OCI-LY7 (cell line): ENCODE measurements at regions of chr7 and their contacts with region 1.

Region 1: DNA sequence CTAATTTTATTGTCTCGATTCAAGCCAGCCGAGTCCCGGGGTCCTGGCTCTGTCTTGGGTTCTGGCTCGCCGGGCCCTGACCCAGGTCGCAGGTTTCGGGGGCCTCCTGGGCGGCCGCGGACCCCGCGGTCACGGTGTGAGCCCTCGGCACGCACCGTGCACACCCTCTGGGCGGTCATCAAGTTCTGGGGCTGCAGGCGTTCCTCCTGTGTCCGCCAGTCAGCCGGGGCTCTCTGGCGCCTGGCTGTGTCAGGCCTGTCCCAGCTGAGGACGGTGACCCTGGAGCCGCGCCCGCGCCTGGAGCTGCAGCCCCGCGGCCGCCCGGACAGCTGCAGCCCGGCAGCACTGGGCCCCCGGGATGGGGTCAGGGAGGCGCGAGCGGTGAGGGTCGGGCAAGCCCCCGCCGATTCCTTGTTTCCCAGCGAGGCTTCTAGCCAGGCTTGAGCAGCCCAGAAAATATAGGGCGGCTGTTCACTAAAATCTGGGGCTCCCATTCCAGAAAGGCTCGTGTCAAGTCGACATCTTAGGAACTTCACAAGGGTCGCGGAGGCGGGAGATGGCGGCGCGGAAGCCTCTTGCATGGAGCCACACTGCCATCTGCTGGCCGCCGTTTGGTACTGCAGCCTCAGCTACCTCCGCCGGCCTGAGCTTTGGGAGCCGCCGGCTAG is 4.2 kb upstream of the HOXA7 start:
- DNase-seq: peak; percentile 88
- H3K4me3 ChIP-seq: peak overlapping the region; percentile 67
- H3K27ac ChIP-seq: no peak overlapping the region
- H3K4me1 ChIP-seq: peaks cover 15% of the 10 kb centered on the region
- CTCF ChIP-seq: peak; percentile 94

Region 2: DNA sequence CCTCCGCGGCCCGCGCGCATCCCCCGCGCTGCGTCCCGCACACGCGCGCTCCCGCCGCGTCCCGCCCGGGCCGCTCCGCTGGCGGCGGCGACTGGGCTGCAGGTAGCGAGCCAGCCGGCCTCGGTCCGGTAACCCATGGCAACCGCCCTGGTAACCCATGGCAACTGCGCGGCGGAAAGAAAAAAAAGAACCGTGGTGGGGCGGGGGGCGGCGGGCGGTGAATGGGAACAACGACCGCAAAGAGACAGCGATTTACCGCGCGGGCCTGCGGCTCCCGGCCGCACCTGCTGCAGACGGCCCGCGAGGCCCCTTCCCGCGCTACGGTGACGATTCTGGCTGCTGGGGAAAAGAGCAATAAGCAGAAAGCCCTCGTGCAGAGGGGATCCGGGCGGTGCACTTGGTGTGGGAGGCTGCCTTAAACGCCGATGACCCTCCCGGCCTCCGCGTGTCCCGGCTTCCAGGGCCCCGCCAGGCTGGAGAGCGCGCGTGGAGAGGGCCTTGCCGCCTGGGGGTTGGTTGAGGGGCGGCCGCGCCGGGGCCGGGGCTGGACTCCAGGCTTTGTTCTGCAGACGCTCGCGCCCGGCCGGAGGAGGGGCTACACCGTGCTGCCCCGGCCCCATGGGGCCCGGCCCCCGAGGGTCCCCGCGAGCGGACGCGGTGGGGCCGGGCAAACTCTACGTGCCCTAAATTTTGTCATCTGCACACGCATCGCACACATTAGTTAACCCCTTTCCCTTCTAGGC is 784.3 kb before region 1 on chr7:
- CTCF ChIA-PET with region 1: interaction called, 23 read pairs
- POLR2A ChIA-PET with region 1: no interaction called
- intact Hi-C with region 1: no loop called
- DNase-seq: peak; percentile 37
- H3K4me3 ChIP-seq: peak overlapping the region; percentile 55
- H3K27ac ChIP-seq: no peak overlapping the region
- H3K4me1 ChIP-seq: peaks cover 16% of the 10 kb centered on the region
- CTCF ChIP-seq: no peak

Region 3: GRCh38 chr7:26667500-26668133 is 493.1 kb before region 1 on chr7:
- CTCF ChIA-PET with region 1: no interaction called
- POLR2A ChIA-PET with region 1: no interaction called
- intact Hi-C with region 1: loop called (anchors 5 kb)
- DNase-seq: peak; percentile 85
- H3K4me3 ChIP-seq: no peak overlapping the region
- H3K27ac ChIP-seq: no peak overlapping the region
- H3K4me1 ChIP-seq: no peaks in the 10 kb centered on the region
- CTCF ChIP-seq: peak; percentile 96

Region 4: GRCh38 chr7:26843705-26844104 is 317.0 kb before region 1 on chr7:
- CTCF ChIA-PET with region 1: interaction called, 14 read pairs
- POLR2A ChIA-PET with region 1: no interaction called
- intact Hi-C with region 1: no loop called
- DNase-seq: peak; percentile 11
- H3K4me3 ChIP-seq: no peak overlapping the region
- H3K27ac ChIP-seq: no peak overlapping the region
- H3K4me1 ChIP-seq: no peaks in the 10 kb centered on the region
- CTCF ChIP-seq: peak; percentile 42; the same call in 1 of the 2 replicates

Region 5: DNA sequence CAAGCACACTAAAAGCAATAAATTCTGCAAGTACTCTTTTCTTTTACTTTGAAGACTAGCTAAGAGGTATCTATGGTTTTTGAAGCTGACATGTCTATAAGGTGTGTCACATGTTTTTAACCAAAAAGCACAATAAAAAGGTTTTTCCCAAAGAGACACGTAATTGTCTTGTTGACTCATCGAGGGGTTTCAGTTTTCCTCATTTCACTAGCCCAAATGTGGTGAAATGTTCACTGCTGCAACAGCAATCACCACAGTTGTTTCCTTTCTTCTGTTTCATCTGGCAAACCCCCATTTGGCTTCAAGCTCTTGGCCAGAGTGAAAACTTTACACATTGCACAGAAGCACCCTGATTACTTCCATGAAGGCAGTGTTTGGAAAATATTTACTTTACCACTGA is 26.3 kb before region 1 on chr7:
- CTCF ChIA-PET with region 1: no interaction called
- POLR2A ChIA-PET with region 1: no interaction called
- intact Hi-C with region 1: no loop called
- DNase-seq: no peak
- H3K4me3 ChIP-seq: no peak overlapping the region
- H3K27ac ChIP-seq: no peak overlapping the region
- H3K4me1 ChIP-seq: peaks cover 4% of the 10 kb centered on the region
- CTCF ChIP-seq: no peak

Region 6: DNA sequence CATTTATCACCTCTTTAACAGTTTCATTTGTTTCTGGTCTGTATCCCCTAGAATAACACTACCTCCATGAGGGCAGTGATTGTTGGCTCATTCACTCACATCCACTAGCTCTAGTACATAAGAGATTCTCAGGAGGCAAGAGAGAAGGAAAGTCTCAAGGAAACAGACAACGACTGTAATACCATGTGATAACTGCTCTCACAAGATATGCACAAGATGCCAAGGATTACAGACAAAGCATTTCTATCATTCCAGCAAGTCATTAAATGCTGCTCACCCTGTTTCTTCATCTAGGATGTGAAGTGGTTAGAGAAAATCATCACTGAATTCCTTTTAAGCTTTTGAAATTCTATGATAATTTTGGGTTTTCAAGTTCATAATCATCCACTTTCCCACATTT is 386.7 kb after region 1 on chr7:
- CTCF ChIA-PET with region 1: no interaction called
- POLR2A ChIA-PET with region 1: no interaction called
- intact Hi-C with region 1: no loop called
- DNase-seq: no peak
- H3K4me3 ChIP-seq: no peak overlapping the region
- H3K27ac ChIP-seq: no peak overlapping the region
- H3K4me1 ChIP-seq: no peaks in the 10 kb centered on the region
- CTCF ChIP-seq: no peak